ENCODE measurements at regions of chr7 and their contacts with region 1.

Region 1: DNA sequence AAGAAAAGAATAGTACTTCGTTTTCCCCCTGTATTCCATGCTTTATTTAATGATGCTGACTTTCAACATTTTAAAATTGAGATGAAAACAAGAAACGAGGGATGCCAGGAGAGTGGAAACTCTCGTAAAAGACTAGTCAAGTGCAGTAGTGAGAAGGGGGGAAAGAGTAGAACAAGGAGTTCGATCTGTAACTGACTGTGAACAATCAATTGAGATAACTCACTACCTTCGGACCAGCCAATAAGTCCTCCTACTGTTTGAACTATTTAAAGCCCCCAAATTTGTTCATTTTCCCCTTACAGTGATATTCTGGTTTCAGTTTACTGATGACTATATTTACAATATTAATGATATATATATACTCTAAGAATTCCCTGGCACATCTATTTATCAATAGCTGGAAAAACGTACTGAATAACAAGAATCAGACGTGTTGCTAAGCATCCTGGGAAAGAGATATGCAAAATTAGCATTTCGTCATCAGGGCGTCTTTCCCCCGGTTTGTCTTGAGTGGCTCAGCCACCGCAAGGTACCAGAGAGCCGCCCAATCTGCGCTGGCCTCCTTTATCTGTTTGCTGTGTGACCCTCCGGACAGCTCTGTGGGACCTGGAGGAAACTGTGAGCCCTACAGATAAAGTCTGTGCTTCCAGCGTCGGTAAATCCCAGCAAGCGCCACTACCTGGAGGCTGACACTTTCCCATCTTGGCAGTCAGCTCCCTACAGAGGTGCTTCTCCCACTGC is 41.1 kb downstream of the PDIA4 start:
- DNase-seq: peak; percentile 81
- H3K4me3 ChIP-seq: peak overlapping the region; percentile 54 to 59 (median 56)
- H3K27ac ChIP-seq: peak overlapping the region; percentile 84
- H3K4me1 ChIP-seq: peaks cover 29% of the 10 kb centered on the region
- H3K27me3 ChIP-seq: no peaks in the 10 kb centered on the region
- CTCF ChIP-seq: no peak

Region 2: GRCh38 chr7:149028346-149029109 is 41.3 kb after region 1 on chr7 and contains the start of gene PDIA4:
- CTCF ChIA-PET with region 1: no interaction called
- dilution Hi-C with region 1: no loop called
- in situ Hi-C with region 1: no loop called
- intact Hi-C with region 1: loop called (anchors 1 kb)
- DNase-seq: peak; percentile 100
- H3K4me3 ChIP-seq: peak within 1 kb of the TSS; percentile 82 to 93 (median 90)
- H3K27ac ChIP-seq: peak within 1 kb of the TSS; percentile 75
- H3K4me1 ChIP-seq: peaks cover 21% of the 10 kb centered on the region
- H3K27me3 ChIP-seq: no peaks in the 10 kb centered on the region
- CTCF ChIP-seq: peak in 1 of 2 donors; percentile 31
- total RNA-seq, gene PDIA4: 175 to 189 TPM

Region 3: DNA sequence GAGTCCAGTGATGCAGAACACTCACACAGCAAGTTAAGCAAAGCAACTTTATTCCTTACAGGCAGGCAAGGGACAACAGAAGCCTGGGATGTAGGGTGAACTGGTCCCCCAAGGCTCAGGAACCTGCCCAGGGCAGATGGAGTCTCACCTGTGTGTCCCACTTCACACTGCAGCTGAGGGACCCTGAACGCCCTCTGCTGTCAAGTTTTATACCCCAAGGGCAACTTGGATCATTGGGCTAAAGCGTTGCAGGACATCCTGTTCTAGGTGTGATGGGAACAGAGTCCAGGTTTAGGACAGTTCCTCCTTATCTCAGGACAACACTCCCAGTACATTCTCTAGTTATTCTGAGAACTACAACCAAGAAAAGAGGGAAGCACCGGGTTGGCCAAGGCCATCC is 559.9 kb after region 1 on chr7:
- CTCF ChIA-PET with region 1: no interaction called
- dilution Hi-C with region 1: no loop called
- in situ Hi-C with region 1: no loop called
- intact Hi-C with region 1: no loop called
- DNase-seq: no peak
- H3K4me3 ChIP-seq: no peak overlapping the region
- H3K27ac ChIP-seq: no peak overlapping the region
- H3K4me1 ChIP-seq: peaks cover 5% of the 10 kb centered on the region
- H3K27me3 ChIP-seq: no peaks in the 10 kb centered on the region
- CTCF ChIP-seq: no peak

Measured in mammary epithelial cell (primary cell).